ENCODE measurements at regions of chr2 and their contacts with region 1.

Region 1: GRCh38 chr2:128986026-128986715 is 667.5 kb upstream of the HS6ST1 start:
- DNase-seq: no peak

Region 2: DNA sequence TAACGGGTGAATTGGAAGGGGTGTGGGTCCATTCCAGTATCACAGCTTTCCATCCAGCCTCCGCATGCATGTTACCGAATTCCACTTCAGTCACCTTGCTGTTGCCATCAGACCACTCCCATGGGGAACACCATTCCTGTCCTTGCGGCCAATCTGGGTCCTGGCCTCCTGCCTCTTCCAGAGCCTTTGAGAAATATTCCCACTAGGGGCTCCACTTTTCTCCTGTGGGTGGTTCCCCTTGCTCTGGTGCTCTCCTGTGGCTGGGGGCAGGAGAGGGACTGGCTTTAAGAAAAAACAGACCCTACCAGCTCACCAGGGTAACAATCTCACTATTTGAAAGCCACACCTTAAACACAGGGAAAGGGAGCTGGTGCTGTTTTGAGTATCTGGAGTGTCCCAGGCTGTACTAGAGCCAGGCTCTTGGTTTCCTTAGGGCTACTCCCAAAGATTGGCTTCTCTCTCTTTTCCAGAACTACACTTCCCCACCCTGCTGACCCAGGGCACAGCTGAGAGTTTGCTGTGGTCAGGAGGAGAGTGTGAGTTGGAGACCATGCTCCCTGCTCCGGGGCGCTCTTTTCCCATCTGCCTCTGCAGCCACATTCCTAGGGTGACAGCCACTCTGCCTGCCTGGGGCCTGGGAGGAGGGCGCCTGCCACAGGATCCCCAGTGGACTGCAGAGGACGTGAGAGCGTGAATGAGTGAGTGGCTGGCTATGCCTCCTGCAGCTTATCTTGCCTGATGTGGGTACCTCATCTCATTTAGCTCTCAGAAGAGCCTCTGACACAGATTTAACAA is 206.7 kb before region 1 on chr2:
- intact Hi-C with region 1: loop called in 1 of 2 experiments (anchors 5 kb)
- DNase-seq: no peak